ENCODE measurements at regions of chr11 and their contacts with region 1.

Region 1: DNA sequence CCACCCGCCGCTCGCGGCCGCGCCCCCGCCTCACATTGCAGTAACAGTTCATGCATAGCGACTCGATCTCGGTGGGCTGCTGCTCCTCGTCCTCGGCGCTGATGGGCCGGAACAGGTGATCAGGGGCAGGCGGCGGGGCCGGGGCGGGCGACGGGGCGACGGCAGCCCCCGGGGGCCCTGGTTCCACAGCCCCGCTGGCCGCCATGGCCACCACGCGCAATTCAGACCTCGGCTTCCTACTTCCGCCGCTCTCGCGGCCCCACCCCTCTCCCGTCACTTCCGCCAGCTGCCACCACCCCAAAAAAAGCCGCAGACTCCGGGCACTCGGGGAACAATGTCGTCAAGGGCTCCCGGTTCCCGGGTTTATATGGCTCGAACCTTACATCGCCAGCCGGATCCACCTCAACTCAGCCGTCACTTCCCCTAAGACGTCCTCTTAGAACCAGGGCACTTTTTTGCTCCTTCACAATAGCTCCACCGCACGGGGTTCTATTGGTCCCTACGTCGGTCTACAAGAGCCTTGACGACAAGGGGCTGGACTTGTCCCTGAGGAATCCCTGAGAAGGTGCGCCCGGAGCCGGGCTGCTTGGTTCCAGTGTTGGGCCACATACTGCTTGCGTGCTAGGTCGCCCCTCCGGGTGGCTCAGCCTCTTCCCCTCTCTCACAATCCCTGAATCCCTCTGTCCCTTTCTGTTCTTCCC is at the start of gene ZPR1:
- DNase-seq: peak; percentile 69 to 91 (median 87)
- ATAC-seq: peak; percentile 80
- H3K4me3 ChIP-seq: peak within 1 kb of the TSS; percentile 60 to 94
- H3K4me3 Mint-ChIP-seq: peak within 1 kb of the TSS; percentile 95
- H3K27ac ChIP-seq: peak within 1 kb of the TSS; percentile 80 to 95
- H3K27ac Mint-ChIP-seq: peak within 1 kb of the TSS; percentile 91
- H3K4me1 ChIP-seq: peaks cover 29% of the 10 kb centered on the region
- H3K4me1 Mint-ChIP-seq: peaks cover 54% of the 10 kb centered on the region
- H3K27me3 ChIP-seq: no peaks in the 10 kb centered on the region
- H3K27me3 Mint-ChIP-seq: no peaks in the 10 kb centered on the region
- CTCF ChIP-seq: no peak
- total RNA-seq, gene ZPR1: 132 to 134 TPM

Region 2: GRCh38 chr11:116798368-116798767 is 10.4 kb after region 1 on chr11:
- CTCF ChIA-PET with region 1: interaction called, 14 read pairs
- POLR2A ChIA-PET with region 1: no interaction called
- intact Hi-C with region 1: no loop called
- DNase-seq: no peak
- ATAC-seq: no peak
- H3K4me3 ChIP-seq: no peak overlapping the region
- H3K4me3 Mint-ChIP-seq: no peak overlapping the region
- H3K27ac ChIP-seq: no peak overlapping the region
- H3K27ac Mint-ChIP-seq: no peak overlapping the region
- H3K4me1 ChIP-seq: no peaks in the 10 kb centered on the region
- H3K4me1 Mint-ChIP-seq: no peaks in the 10 kb centered on the region
- H3K27me3 ChIP-seq: no peaks in the 10 kb centered on the region
- H3K27me3 Mint-ChIP-seq: peaks cover 6% of the 10 kb centered on the region
- CTCF ChIP-seq: no peak

Region 3: GRCh38 chr11:117384041-117384440 is 596.1 kb after region 1 on chr11:
- CTCF ChIA-PET with region 1: no interaction called
- POLR2A ChIA-PET with region 1: no interaction called
- intact Hi-C with region 1: no loop called
- DNase-seq: no peak
- ATAC-seq: no peak
- H3K4me3 ChIP-seq: no peak overlapping the region
- H3K4me3 Mint-ChIP-seq: no peak overlapping the region
- H3K27ac ChIP-seq: no peak overlapping the region
- H3K27ac Mint-ChIP-seq: no peak overlapping the region
- H3K4me1 ChIP-seq: no peaks in the 10 kb centered on the region
- H3K4me1 Mint-ChIP-seq: no peaks in the 10 kb centered on the region
- H3K27me3 ChIP-seq: no peaks in the 10 kb centered on the region
- H3K27me3 Mint-ChIP-seq: no peaks in the 10 kb centered on the region
- CTCF ChIP-seq: no peak

Measured in CD8-positive, alpha-beta T cell (primary cell).